Activated CD4-positive, alpha-beta memory T cell treated with anti-CD3 and anti-CD28 coated beads for 36 hours (primary cell): ENCODE measurements at regions of chr7 and their contacts with region 1.

Region 1: DNA sequence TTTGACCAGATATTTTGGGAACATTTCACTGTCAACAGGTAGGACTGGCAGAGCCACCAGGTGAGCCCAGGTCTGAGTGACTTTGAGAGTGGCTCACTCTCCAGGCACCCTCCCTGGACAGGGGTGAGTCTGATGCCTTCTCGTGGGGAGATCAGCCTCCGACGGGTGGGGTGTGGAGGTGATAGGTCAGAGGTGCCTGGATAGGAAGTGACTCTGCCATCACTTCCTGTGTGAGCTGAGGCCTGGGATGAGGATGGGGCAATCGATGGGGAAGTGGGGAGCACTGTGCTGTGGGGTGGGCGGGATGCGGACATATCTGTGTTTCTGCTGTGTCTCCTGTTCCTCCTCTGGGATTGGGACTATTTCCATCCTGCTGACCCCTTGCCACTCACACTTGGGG is 34.6 kb downstream of the IFT22 start:
- DNase-seq: no peak
- H3K4me3 Mint-ChIP-seq: no peak overlapping the region
- H3K27ac Mint-ChIP-seq: no peak overlapping the region
- H3K4me1 Mint-ChIP-seq: peaks cover 20% of the 10 kb centered on the region
- H3K27me3 Mint-ChIP-seq: peaks cover 7% of the 10 kb centered on the region

Region 2: GRCh38 chr7:101235050-101235449 is 52.0 kb before region 1 on chr7:
- CTCF ChIA-PET with region 1: interaction called, 10 read pairs
- POLR2A ChIA-PET with region 1: no interaction called
- intact Hi-C with region 1: no loop called
- DNase-seq: no peak
- H3K4me3 Mint-ChIP-seq: no peak overlapping the region
- H3K27ac Mint-ChIP-seq: no peak overlapping the region
- H3K4me1 Mint-ChIP-seq: no peaks in the 10 kb centered on the region
- H3K27me3 Mint-ChIP-seq: no peaks in the 10 kb centered on the region

Region 3: GRCh38 chr7:101251871-101252659 is 35.0 kb before region 1 on chr7:
- CTCF ChIA-PET with region 1: interaction called, 10 read pairs
- POLR2A ChIA-PET with region 1: no interaction called
- intact Hi-C with region 1: loop called (anchors 5 kb)
- DNase-seq: peak; percentile 99
- H3K4me3 Mint-ChIP-seq: peak overlapping the region; percentile 95
- H3K27ac Mint-ChIP-seq: peak overlapping the region; percentile 92
- H3K4me1 Mint-ChIP-seq: peaks cover 20% of the 10 kb centered on the region
- H3K27me3 Mint-ChIP-seq: peaks cover 3% of the 10 kb centered on the region

Region 4: DNA sequence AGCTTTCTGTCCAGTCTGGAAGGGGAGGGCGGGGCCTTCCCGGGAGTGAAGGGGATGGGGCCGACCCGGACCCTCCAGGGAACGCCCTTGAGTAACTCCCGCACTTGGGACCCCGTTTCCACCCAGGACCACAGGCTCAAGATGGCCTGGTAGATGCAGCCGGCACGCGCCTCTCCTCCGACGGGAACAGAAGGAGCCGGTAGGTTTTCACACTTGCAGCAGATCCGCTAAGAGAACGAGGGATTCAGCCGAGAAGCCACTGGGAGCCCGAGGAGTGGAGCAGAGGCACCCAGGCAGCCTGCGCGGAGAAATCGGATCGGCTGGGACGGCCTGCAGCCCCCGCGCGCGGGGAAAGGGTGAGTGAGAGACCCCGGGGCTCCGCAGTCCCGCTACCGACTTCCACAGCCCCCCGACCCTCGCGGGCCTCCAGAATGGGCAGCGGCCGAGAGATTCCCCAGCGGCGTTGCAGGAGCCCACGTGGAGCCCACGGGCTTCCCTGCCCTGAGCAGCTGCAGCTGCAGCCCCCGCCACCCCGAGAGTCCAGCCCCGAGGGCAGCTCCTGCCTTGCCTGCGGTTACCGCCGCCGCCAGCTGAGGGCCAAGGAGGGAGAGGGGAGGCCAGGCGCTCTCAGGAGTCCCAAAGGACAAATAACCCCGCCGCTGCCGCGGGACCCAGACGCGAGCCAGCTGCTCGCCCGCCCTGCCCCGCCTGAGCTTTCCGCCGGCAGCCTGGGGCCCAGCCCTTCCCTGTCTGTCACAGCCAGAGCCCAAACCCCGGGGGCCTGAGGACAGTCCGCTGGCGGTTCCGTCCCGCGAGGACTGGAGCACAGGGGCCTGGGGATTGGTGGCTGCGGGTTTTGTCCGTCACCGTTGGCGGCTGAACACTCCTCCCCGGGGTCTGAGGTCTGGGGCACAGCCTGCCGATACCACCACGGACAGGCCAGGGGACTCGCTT is 12.8 kb after region 1 on chr7:
- CTCF ChIA-PET with region 1: interaction called, 13 read pairs
- POLR2A ChIA-PET with region 1: no interaction called
- intact Hi-C with region 1: no loop called
- DNase-seq: no peak
- H3K4me3 Mint-ChIP-seq: no peak overlapping the region
- H3K27ac Mint-ChIP-seq: no peak overlapping the region
- H3K4me1 Mint-ChIP-seq: peaks cover 6% of the 10 kb centered on the region
- H3K27me3 Mint-ChIP-seq: peaks cover 51% of the 10 kb centered on the region